Endothelial cell of umbilical vein (primary cell): ENCODE measurements at regions of chr20 and their contacts with region 1.

Region 1: DNA sequence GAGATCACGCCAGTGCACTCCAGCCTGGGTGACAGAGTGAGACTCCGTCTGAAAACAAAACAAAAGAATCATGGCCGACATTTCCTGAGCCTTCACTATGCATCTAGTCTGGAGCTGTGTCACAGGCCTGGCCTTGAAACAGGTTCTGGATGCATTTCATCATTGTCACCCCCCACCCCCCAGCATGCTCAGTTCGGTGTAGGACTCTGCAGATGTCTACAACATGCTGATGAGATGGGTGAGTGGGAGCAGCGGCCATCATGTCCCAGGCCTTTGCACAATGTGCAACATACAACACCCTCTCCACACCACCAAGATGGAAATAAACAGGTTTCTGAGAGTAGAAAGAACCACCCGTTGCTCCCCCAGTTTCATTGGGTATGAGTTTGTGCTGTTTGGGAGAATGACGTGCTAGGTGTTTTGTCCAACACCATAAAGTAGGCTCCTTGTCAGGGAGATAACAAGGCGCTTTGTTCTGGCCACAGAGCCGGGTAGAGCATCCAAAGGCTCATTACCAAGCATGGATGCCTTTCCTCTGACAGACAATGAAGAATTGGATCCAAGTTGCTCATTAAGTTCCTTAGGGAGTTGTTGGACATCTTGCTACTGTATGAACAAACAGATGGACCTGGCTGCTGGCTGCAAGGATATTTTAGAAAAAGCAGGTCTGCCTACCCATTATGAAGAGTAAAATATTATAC is 22.1 kb downstream of the SNHG17 start:
- DNase-seq: no peak
- H3K4me3 ChIP-seq: no peak overlapping the region
- H3K27ac ChIP-seq: no peak overlapping the region
- H3K4me1 ChIP-seq: no peaks in the 10 kb centered on the region
- H3K27me3 ChIP-seq: no peaks in the 10 kb centered on the region
- CTCF ChIP-seq: no peak
- POLR2A ChIP-seq: no peak

Region 2: DNA sequence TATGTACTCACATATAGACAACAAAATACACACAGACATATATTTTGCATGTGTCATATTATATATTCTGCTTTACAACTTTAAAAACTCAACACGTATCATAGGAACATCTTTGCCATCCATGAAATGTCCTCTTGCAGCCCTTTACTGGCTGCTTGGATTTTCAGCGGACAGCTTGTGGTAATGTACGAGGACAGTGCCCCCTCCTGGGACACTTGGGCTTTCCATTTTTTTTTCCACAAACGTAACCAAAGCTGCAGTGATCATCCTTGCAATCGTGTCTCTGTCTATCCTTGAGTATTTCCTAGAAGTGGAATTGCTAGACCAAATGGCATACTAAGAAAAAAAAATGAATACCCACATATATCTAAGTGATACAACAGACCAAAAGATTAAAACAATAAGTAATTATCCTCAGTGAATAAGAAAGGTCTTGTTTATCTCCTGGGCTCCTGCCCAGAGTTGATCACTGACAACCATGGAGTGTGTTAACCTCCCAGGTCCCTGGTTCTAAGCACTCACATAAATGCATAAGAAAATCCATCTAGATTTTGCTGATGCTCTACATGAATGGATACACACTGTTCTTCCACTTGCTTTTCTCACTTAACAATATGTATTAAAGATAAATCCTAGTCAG is 90.9 kb before region 1 on chr20:
- CTCF ChIA-PET with region 1: interaction called, 17 read pairs
- POLR2A ChIA-PET with region 1: no interaction called
- dilution Hi-C with region 1: no loop called
- intact Hi-C with region 1: no loop called
- DNase-seq: peak; percentile 69
- H3K4me3 ChIP-seq: no peak overlapping the region
- H3K27ac ChIP-seq: no peak overlapping the region
- H3K4me1 ChIP-seq: no peaks in the 10 kb centered on the region
- H3K27me3 ChIP-seq: peaks cover 2 to 5% of the 10 kb centered on the region in 2 experiments
- CTCF ChIP-seq: peak; percentile 66 to 69
- POLR2A ChIP-seq: no peak

Region 3: GRCh38 chr20:38337561-38338140 is 75.4 kb before region 1 on chr20:
- CTCF ChIA-PET with region 1: interaction called, 51 read pairs
- POLR2A ChIA-PET with region 1: no interaction called
- dilution Hi-C with region 1: no loop called
- intact Hi-C with region 1: loop called (anchors 1 kb)
- DNase-seq: no peak
- H3K4me3 ChIP-seq: no peak overlapping the region
- H3K27ac ChIP-seq: no peak overlapping the region
- H3K4me1 ChIP-seq: no peaks in the 10 kb centered on the region
- H3K27me3 ChIP-seq: no peaks in the 10 kb centered on the region
- CTCF ChIP-seq: peak; percentile 32 to 42
- POLR2A ChIP-seq: no peak

Region 4: GRCh38 chr20:38395165-38395564 is 17.9 kb before region 1 on chr20:
- CTCF ChIA-PET with region 1: interaction called, 17 read pairs
- POLR2A ChIA-PET with region 1: no interaction called
- dilution Hi-C with region 1: no loop called
- intact Hi-C with region 1: no loop called
- DNase-seq: no peak
- H3K4me3 ChIP-seq: no peak overlapping the region
- H3K27ac ChIP-seq: no peak overlapping the region
- H3K4me1 ChIP-seq: no peaks in the 10 kb centered on the region
- H3K27me3 ChIP-seq: peaks cover 7 to 8% of the 10 kb centered on the region in 2 experiments
- CTCF ChIP-seq: no peak
- POLR2A ChIP-seq: no peak